Motor neuron (in vitro differentiated cells): ENCODE measurements at regions of chr18 and their contacts with region 1.

Region 1: DNA sequence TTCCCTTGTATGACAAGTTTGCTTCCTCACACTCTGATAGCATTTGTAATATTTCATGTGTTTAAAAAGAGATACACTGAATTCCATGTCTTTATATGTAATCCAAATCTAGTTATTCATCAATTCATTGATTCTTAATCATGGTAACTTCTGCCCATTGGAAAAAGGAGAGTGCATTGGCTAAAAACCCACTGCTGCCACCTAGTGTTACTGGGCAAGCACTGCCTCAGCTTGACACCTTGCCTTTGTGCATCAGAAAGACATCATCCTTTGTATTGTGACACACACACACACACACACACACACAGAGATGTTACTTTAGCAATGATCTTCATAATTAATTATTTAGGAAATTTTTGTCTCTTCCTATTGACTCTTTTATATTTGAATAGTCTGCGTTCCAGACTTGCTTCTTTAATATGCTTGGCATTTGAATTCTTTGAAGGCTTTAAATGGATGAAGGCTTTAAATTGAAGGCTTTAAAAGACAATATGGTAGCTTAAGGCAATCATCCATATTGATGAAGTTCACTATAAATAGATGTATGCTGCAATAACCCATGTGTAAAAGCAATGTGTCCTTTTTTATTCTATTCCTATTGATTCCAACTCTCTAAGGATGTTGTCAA is 414.2 kb upstream of the CHST9 start:
- ATAC-seq: peak in 5 of 8 experiments; percentile 41 to 73 (median 58)
- H3K4me3 ChIP-seq: no peak overlapping the region
- H3K27ac ChIP-seq: no peak overlapping the region
- H3K4me1 ChIP-seq: peaks cover 3 to 17% of the 10 kb centered on the region in 2 donors

Region 2: DNA sequence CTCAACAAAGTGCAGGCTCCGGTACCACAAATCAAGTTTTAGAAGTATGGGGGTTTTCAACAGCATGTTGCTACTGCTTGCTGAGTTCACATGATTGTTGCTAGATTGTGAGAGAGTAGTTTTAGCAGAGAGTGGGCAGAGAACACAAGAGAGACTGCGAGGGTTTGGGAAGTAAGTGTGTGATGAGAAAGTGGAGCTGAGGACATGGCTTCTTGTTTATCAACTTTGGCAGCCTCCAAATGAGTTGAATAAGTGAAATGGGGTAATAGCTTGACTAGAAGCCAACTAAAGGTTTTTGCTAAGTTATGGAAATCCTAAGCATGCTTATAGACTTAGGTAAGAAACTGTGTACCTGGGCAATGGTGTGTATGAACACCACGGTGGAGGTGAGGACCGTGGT is 549.3 kb before region 1 on chr18:
- in situ Hi-C with region 1: no loop called
- ATAC-seq: no peak
- H3K4me3 ChIP-seq: no peak overlapping the region
- H3K27ac ChIP-seq: no peak overlapping the region
- H3K4me1 ChIP-seq: peaks cover 0 to 2% of the 10 kb centered on the region in 2 donors

Region 3: DNA sequence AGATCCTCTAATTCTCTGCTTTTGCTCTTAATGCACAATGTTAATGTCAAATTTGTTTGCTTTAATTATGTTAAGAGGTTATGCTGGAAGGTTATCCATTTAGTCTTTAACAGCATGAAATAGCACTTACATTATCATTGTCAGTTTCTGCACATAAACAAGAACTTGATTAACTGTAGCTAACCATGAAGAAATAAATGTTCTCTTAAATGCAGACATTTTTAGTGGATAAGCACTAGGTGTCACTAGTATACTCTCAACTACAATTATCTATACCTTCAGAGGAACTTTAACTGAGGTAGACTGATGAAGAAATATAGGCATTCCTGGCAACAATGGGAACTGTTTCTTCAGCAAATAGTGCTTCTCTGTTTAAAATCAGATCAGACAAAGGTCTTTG is 235.4 kb before region 1 on chr18:
- in situ Hi-C with region 1: loop called in 2 of 9 experiments (anchors 10 kb)
- ATAC-seq: peak in 4 of 8 experiments; percentile 32 to 97 (median 74)
- H3K4me3 ChIP-seq: no peak overlapping the region
- H3K27ac ChIP-seq: no peak overlapping the region
- H3K4me1 ChIP-seq: peaks cover 5 to 20% of the 10 kb centered on the region in 2 donors